Activated T-helper 1 cell treated with anti-CD3 and anti-CD28 coated beads, Interleukin-12 subunit alpha, Interleukin-12 subunit beta, Interleukin-2, Interleukin-4 antibody, amounts not matched to agents 30 ng/mL and 10 ng/mL and 1 ng/mL, durations not matched to agents 14 hours and 24 hours and 36 hours (primary cell): ENCODE measurements at regions of chr22 and their contacts with region 1.

Region 1: DNA sequence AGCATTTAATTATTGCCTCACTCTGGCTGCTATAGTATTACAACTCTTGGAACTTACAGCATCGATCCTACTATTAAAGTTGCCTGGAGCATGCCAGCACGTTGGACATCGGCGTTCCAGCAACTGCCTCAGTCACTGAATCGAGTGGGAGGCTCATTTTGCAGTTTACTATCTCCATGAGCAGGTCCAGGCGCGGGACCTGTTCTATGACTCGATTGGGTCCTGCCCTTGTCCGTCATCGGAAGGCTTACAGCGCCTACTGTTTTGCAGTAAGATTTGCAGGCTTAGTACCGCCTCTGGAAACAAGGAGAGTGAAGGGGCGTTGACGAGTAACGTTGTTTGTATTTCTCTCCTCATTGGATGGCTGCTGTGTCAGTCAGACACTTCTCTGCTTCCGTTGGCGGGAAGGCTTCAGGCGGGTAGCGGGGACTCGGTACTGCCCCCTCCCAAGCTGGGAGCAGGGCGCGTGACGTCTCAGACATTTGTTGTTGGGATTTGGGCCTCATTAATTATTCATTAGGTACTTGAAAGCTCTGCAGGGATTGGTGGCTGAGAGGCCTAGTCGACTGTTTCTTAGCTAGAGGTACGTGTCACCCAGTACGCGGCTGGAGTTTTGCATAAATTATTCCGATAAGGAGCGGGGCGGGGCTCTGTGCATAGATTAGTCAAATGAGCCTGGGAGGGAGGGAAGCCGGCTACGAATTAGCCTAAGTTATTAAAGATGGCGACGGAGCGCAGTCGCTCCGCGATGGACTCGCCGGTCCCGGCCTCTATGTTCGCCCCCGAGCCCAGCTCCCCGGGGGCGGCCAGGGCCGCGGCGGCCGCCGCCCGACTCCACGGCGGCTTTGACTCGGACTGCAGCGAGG is at the start of gene GTPBP1:
- DNase-seq: peak; percentile 96
- H3K4me3 Mint-ChIP-seq: peak within 1 kb of the TSS; percentile 94
- H3K27ac Mint-ChIP-seq: peak within 1 kb of the TSS; percentile 97
- H3K4me1 Mint-ChIP-seq: peaks cover 55% of the 10 kb centered on the region
- H3K27me3 Mint-ChIP-seq: peaks cover 2% of the 10 kb centered on the region
- total RNA-seq, gene GTPBP1: 102 and 111 TPM in 2 replicates

Region 2: GRCh38 chr22:37229805-37230672 is 1475.4 kb before region 1 on chr22:
- intact Hi-C with region 1: loop called (anchors 10 kb)
- DNase-seq: peak; percentile 87
- H3K4me3 Mint-ChIP-seq: peak overlapping the region; percentile 80
- H3K27ac Mint-ChIP-seq: peak overlapping the region; percentile 99
- H3K4me1 Mint-ChIP-seq: peaks cover 88% of the 10 kb centered on the region
- H3K27me3 Mint-ChIP-seq: no peaks in the 10 kb centered on the region

Region 3: GRCh38 chr22:38181453-38182247 is 523.8 kb before region 1 on chr22 and contains the start of gene PLA2G6:
- intact Hi-C with region 1: loop called (anchors 2 kb)
- DNase-seq: peak; percentile 99
- H3K4me3 Mint-ChIP-seq: peak within 1 kb of the TSS; percentile 89
- H3K27ac Mint-ChIP-seq: peak within 1 kb of the TSS; percentile 95
- H3K4me1 Mint-ChIP-seq: peaks cover 48% of the 10 kb centered on the region
- H3K27me3 Mint-ChIP-seq: peaks cover 10% of the 10 kb centered on the region
- total RNA-seq, gene PLA2G6: 34.8 and 34.9 TPM in 2 replicates

Region 4: DNA sequence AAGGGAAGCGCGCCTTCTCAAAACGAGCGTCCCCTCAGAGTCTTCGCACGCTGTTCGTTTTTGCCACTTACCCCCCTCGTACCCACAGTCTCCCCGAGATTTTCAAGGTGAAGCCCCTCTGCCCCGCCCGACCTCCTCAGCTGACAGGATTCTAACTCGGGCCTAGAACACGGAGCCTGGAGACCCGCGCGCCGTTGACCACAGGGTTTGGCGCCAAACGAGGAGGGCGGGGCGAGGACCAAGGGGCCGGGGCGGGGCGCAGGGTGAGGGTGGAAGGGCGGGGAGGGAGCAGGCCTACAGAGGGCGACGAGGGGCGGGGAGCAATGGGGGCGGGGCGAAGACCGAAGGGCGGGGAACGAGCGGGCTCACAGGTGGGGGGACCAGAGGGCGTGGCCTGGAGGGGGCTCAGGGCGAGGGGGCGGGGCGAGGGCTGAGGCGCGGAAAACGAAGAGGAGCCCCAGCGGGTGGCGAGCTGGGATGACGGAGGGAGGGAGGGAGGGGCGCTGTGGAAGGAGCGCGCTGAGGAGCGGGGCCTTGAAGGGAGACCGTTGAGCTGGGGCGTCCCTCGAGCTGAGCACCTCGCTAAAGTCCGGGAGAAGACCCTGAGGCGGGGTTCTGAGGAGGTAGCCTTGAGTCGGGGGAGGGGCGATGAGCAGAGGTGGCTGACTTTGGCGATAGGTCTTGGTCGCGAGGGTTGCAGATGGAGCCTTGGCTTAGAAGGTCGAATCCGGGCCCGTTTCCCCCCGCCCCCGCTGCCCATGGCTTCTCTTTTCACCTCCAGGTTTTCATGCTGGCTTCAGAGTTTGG is 135.3 kb before region 1 on chr22 and contains the start of gene DMC1:
- intact Hi-C with region 1: loop called (anchors 5 kb)
- DNase-seq: peak; percentile 86
- H3K4me3 Mint-ChIP-seq: peak within 1 kb of the TSS; percentile 90
- H3K27ac Mint-ChIP-seq: peak within 1 kb of the TSS; percentile 92
- H3K4me1 Mint-ChIP-seq: peaks cover 16% of the 10 kb centered on the region
- H3K27me3 Mint-ChIP-seq: no peaks in the 10 kb centered on the region
- total RNA-seq, gene DMC1: 11.2 and 11.7 TPM in 2 replicates

Region 5: GRCh38 chr22:38681784-38682335 is 23.6 kb before region 1 on chr22 and contains the start of gene TOMM22:
- intact Hi-C with region 1: loop called (anchors 1 kb)
- DNase-seq: peak; percentile 83
- H3K4me3 Mint-ChIP-seq: peak within 1 kb of the TSS; percentile 98
- H3K27ac Mint-ChIP-seq: peak within 1 kb of the TSS; percentile 96
- H3K4me1 Mint-ChIP-seq: peaks cover 21% of the 10 kb centered on the region
- H3K27me3 Mint-ChIP-seq: no peaks in the 10 kb centered on the region
- total RNA-seq, gene TOMM22: 153 and 156 TPM in 2 replicates

Region 6: GRCh38 chr22:38793721-38794466 is 88.4 kb after region 1 on chr22 and contains the start of gene DNAL4:
- intact Hi-C with region 1: loop called (anchors 1 kb)
- DNase-seq: peak; percentile 90
- H3K4me3 Mint-ChIP-seq: peak within 1 kb of the TSS; percentile 93
- H3K27ac Mint-ChIP-seq: peak within 1 kb of the TSS; percentile 80
- H3K4me1 Mint-ChIP-seq: peaks cover 22% of the 10 kb centered on the region
- H3K27me3 Mint-ChIP-seq: peaks cover 4% of the 10 kb centered on the region
- total RNA-seq, gene DNAL4: 5.0 TPM in 2 replicates

Region 7: DNA sequence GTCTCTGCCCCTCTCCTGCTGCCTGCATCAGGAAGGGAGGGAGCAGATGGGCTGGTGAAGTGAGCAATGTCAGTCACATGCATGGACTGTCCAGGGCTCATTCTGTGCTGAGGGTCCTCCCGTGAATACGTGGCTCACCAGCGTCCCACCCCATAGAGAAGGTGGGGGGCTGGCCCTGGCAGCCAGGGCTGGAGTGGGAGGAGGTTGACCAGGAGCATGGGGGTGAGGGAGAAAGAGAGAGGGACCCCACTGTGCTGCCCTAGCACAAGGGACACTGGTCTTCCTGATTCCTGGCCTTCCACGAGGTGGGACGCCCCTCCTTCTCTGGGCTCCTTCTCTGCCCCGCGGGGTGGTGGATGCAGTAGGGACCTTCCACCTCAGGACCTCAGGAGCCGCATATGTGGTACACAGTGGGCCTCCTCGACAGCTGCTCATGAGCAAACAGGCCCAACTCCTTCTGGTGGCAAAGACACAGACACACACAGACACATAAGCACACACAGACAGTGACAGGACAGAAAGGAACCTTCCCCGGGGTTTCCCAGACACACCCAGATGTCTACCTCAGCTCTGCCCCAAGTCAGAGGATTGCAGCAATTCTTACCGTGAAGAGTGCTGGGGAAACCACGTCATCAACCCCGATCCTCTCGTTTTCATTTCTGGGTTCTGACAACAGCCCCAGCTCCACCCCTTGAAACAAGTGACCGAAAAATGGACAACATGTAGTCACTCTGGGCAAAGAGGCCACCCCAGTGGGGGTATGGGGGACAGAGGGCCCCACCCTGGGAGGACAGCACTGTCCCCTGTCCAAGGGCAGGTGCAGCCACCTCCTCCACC is 248.3 kb after region 1 on chr22:
- intact Hi-C with region 1: loop called (anchors 2 kb)
- DNase-seq: peak; percentile 84
- H3K4me3 Mint-ChIP-seq: peak overlapping the region; percentile 63
- H3K27ac Mint-ChIP-seq: peak overlapping the region; percentile 98
- H3K4me1 Mint-ChIP-seq: peaks cover 67% of the 10 kb centered on the region
- H3K27me3 Mint-ChIP-seq: peaks cover 6% of the 10 kb centered on the region